ENCODE measurements at regions of chr2 and their contacts with region 1.

Region 1: GRCh38 chr2:169824373-169825333 is at the start of gene METTL5:
- DNase-seq: peak; percentile 83
- H3K4me3 Mint-ChIP-seq: peak within 1 kb of the TSS; percentile 84
- H3K27ac Mint-ChIP-seq: peak within 1 kb of the TSS; percentile 71
- H3K4me1 Mint-ChIP-seq: peaks cover 56% of the 10 kb centered on the region
- H3K27me3 Mint-ChIP-seq: no peaks in the 10 kb centered on the region
- total RNA-seq, gene METTL5: 111 to 116 TPM

Region 2: GRCh38 chr2:169363560-169364150 is 461.0 kb before region 1 on chr2:
- CTCF ChIA-PET with region 1: no interaction called
- intact Hi-C with region 1: loop called (anchors 10 kb)
- DNase-seq: peak; percentile 63
- H3K4me3 Mint-ChIP-seq: peak overlapping the region; percentile 84
- H3K27ac Mint-ChIP-seq: peak overlapping the region; percentile 57
- H3K4me1 Mint-ChIP-seq: peaks cover 32% of the 10 kb centered on the region
- H3K27me3 Mint-ChIP-seq: peaks cover 31% of the 10 kb centered on the region

Region 3: GRCh38 chr2:169573160-169573973 is 251.3 kb before region 1 on chr2 and contains the start of gene FASTKD1:
- CTCF ChIA-PET with region 1: no interaction called
- intact Hi-C with region 1: loop called (anchors 2 kb)
- DNase-seq: peak; percentile 94
- H3K4me3 Mint-ChIP-seq: peak within 1 kb of the TSS; percentile 98
- H3K27ac Mint-ChIP-seq: peak within 1 kb of the TSS; percentile 89
- H3K4me1 Mint-ChIP-seq: peaks cover 23% of the 10 kb centered on the region
- H3K27me3 Mint-ChIP-seq: no peaks in the 10 kb centered on the region
- total RNA-seq, gene FASTKD1: 41.3 to 42.7 TPM

Region 4: DNA sequence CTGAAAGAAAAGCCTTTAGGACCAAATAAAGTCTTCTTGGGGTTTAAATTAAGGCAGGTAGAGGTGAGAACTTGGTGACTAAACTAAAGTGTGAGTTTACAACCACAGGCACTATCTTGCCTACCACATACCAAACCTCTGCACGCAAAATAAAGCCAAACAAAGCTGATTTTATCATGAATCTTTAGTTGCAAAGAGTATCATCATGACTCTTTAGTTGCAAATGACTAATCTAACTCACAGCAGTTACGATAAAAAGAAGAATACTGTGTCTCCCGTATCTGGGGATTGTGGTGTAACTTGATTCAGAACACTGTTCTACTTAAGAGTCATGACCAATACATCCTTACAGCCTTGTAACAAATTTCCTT is 141.6 kb before region 1 on chr2:
- CTCF ChIA-PET with region 1: no interaction called
- intact Hi-C with region 1: no loop called
- DNase-seq: peak; percentile 10
- H3K4me3 Mint-ChIP-seq: no peak overlapping the region
- H3K27ac Mint-ChIP-seq: no peak overlapping the region
- H3K4me1 Mint-ChIP-seq: no peaks in the 10 kb centered on the region
- H3K27me3 Mint-ChIP-seq: no peaks in the 10 kb centered on the region

Region 5: DNA sequence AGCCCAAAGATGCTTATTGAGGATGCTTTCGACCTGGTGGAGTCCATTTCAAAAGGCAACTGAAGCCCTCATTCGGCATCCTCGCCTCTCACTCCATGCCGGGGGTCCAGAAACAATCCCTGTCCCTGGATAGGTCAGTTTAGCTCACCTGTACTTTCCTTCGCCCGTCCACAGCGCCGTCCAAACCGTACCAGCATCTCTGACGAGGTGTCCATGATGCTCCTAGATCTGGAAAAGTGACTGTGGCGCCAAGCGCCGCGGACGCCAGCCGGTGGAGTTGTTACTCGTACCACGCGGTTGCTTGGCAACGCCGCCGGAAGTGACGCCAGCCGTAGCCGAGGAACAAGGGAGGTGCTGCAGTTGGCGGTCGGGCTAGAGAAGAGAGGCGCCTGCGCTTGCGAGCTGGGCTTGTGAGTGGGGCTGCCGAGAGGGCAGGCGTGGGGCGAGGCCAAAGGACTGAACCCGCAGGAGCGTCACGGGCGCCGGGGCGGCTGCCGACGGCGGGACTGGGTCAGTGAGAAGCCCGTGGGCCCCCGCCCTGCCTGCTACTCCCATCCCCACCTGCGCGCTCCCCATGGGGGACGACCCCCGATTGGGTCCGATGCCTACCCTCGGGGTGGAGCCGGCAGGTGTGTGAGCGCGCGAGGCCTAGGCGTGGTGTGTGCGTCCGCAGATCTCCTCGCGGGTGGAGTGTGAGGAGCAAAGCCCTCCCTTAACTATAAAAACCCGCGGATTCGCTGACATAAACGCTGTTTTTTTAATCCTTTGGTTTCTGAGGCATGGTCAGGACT is 130.3 kb before region 1 on chr2 and contains the starts of genes CFAP210 and PHOSPHO2:
- CTCF ChIA-PET with region 1: interaction called, 4 read pairs
- intact Hi-C with region 1: loop called (anchors 2 kb)
- DNase-seq: peak; percentile 98
- H3K4me3 Mint-ChIP-seq: peak within 1 kb of the TSS; percentile 84
- H3K27ac Mint-ChIP-seq: peak within 1 kb of the TSS; percentile 71
- H3K4me1 Mint-ChIP-seq: peaks cover 13% of the 10 kb centered on the region
- H3K27me3 Mint-ChIP-seq: no peaks in the 10 kb centered on the region
- total RNA-seq, gene CFAP210: not detected
- total RNA-seq, gene PHOSPHO2: 1.2 TPM

Region 6: GRCh38 chr2:169877398-169877797 is 52.7 kb after region 1 on chr2:
- CTCF ChIA-PET with region 1: interaction called, 6 read pairs
- intact Hi-C with region 1: loop called (anchors 1 kb)
- DNase-seq: peak; percentile 32
- H3K4me3 Mint-ChIP-seq: no peak overlapping the region
- H3K27ac Mint-ChIP-seq: no peak overlapping the region
- H3K4me1 Mint-ChIP-seq: no peaks in the 10 kb centered on the region
- H3K27me3 Mint-ChIP-seq: no peaks in the 10 kb centered on the region

Region 7: DNA sequence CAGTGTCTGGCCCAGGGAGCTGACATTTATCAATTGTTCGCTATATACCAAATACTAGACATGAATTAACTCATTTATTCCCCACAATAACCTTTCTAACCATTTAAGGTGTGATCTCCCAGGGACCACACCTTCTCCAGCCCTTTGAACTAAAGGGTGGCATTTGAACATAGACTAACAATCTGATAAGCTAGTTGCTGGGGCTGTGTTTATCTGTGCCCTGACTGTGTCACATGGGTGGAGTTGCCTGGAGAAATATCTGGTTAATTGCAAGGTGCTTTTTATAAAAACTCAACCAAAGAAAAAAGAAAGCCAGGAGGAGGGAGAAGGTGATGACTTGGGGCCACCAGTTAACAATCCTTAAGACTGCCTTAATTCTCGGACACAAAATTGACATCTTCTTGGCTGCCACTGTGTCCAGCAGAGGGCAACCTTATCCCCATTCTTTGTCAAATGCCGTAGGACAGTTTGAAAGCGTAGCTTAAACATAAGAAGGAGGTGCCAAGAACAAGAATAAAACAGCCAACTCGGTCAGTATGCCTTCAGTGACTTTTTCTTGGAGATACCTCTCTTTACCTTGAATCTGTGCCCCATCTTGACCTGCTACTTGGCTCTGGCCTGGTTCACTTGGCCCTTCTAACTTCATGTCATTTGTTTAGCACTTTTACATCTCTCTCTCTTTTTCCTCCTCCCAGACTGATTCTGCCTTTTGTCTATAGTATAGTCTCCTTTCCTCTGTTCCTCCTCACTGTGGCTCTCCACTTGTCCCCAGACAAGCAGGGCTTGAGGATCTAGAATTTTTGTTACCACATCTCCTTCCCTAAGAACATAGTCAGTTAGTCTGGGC is 536.7 kb after region 1 on chr2:
- CTCF ChIA-PET with region 1: no interaction called
- intact Hi-C with region 1: loop called (anchors 5 kb)
- DNase-seq: peak; percentile 77
- H3K4me3 Mint-ChIP-seq: no peak overlapping the region
- H3K27ac Mint-ChIP-seq: no peak overlapping the region
- H3K4me1 Mint-ChIP-seq: peaks cover 28% of the 10 kb centered on the region
- H3K27me3 Mint-ChIP-seq: peaks cover 6% of the 10 kb centered on the region

Region 8: GRCh38 chr2:171433763-171434670 is 1609.4 kb after region 1 on chr2 and contains the starts of genes DCAF17 and METTL8:
- CTCF ChIA-PET with region 1: no interaction called
- intact Hi-C with region 1: loop called (anchors 10 kb)
- DNase-seq: peak; percentile 96
- H3K4me3 Mint-ChIP-seq: peak within 1 kb of the TSS; percentile 86
- H3K27ac Mint-ChIP-seq: peak within 1 kb of the TSS; percentile 94
- H3K4me1 Mint-ChIP-seq: peaks cover 54% of the 10 kb centered on the region
- H3K27me3 Mint-ChIP-seq: no peaks in the 10 kb centered on the region
- total RNA-seq, gene DCAF17: 21.1 to 21.3 TPM
- total RNA-seq, gene METTL8: 32.9 to 34.5 TPM